CD8-positive, alpha-beta memory T cell (primary cell): ENCODE measurements at regions of chr7 and their contacts with region 1.

Region 1: DNA sequence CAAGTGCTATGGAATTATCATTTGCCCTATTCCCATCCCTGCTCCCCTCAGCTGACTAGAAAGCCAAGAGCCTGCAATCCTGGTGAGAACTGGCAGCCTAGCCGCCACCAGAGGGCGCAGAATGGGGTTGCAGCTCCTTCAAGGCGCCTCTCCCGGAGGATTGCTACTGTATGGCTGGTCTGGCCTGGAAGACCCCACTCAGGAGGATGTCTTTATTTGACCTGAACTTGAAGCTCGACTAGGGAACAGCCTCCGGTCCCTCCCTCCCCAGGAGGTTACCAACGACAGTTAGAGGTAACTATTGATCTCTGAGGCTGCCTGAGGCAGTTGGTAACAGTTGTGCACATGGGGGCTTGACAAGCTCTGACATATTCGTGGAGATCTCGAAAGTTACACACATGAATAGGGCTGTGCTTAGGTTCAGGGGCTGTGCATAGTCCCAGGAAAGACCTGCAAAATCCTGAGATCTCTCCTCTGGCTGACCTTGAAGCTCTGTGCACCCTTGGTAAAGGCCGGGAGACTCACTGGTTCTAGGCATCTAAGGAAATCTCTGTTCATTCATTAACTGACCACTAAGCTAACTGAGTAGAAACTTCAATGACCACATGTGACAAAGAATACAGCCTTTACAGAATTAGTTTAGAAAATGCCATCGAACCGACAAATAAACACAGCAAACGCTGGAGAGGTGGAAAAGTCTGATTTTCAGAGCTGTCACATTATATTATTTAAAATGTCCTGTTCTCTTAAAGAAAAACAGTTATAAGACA is 65.7 kb downstream of the TSPAN12 start:
- DNase-seq: peak; percentile 10 to 63 (median 31)
- H3K4me3 ChIP-seq: no peak overlapping the region
- H3K4me3 Mint-ChIP-seq: no peak overlapping the region
- H3K27ac ChIP-seq: no peak overlapping the region
- H3K27ac Mint-ChIP-seq: no peak overlapping the region
- H3K4me1 ChIP-seq: no peaks in the 10 kb centered on the region
- H3K4me1 Mint-ChIP-seq: no peaks in the 10 kb centered on the region
- H3K27me3 ChIP-seq: no peaks in the 10 kb centered on the region
- H3K27me3 Mint-ChIP-seq: peaks cover 5 to 8% of the 10 kb centered on the region in 2 donors

Region 2: DNA sequence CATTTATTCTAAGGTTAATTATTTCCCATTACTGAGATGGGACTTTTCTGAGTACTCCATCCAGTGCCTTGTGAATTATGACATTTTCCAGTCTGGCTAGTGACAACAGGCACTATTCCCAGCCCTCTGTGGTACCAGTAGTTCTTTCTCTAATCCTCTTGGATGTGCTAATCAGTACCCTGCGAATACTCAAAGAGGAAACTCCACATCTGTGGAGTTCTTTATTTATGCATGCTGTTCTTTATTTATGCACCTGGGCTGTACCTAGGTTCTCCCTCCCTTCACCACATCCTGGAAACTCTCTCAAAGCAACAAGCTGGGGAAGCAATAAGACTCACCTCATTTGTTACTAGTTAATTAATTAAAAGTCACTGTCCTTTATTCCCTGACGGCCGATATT is 17.8 kb before region 1 on chr7:
- CTCF ChIA-PET with region 1: interaction called, 10 read pairs
- POLR2A ChIA-PET with region 1: no interaction called
- DNase-seq: no peak
- H3K4me3 ChIP-seq: no peak overlapping the region
- H3K4me3 Mint-ChIP-seq: no peak overlapping the region
- H3K27ac ChIP-seq: no peak overlapping the region
- H3K27ac Mint-ChIP-seq: no peak overlapping the region
- H3K4me1 ChIP-seq: no peaks in the 10 kb centered on the region
- H3K4me1 Mint-ChIP-seq: no peaks in the 10 kb centered on the region
- H3K27me3 ChIP-seq: no peaks in the 10 kb centered on the region
- H3K27me3 Mint-ChIP-seq: peaks cover 0 to 2% of the 10 kb centered on the region in 2 donors

Region 3: DNA sequence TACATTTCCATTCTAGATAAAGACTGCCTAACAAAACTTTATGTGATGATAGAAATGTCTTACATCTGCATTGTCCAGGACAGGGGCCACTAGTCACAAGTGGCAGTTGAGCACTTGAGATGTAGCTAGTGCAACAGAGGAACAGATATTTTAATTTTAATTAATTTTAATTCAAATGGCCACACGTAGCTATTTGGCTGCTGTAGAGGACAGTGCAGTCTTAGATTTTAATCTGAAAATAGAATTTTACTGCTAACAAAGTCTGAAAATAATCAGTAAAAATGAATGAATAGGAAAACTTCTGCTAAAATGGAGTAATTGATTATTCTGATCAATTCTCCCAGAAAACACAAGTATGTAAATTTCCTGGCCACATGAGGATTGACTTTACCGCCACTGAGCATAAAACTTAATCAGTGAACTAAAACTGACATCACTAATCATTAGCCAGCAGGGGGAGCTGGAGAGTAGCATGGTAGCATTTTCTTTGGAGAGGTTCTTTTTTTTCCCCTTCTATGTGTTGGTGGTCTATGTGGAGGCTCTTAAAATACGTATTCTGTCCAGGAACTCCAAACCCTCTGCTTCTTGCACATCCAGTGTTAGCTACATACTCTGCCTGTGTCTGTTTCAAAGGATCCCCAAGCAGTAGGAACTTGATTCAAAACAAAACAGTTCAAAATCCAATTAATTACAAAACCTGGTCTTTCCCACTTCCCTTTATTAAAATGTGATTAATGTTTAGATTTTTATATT is 13.5 kb after region 1 on chr7:
- CTCF ChIA-PET with region 1: interaction called, 15 read pairs
- POLR2A ChIA-PET with region 1: no interaction called
- DNase-seq: peak; percentile 14 to 52 (median 33)
- H3K4me3 ChIP-seq: no peak overlapping the region
- H3K4me3 Mint-ChIP-seq: no peak overlapping the region
- H3K27ac ChIP-seq: no peak overlapping the region
- H3K27ac Mint-ChIP-seq: no peak overlapping the region
- H3K4me1 ChIP-seq: no peaks in the 10 kb centered on the region
- H3K4me1 Mint-ChIP-seq: no peaks in the 10 kb centered on the region
- H3K27me3 ChIP-seq: no peaks in the 10 kb centered on the region
- H3K27me3 Mint-ChIP-seq: peaks cover 2 to 22% of the 10 kb centered on the region in 2 donors

Region 4: DNA sequence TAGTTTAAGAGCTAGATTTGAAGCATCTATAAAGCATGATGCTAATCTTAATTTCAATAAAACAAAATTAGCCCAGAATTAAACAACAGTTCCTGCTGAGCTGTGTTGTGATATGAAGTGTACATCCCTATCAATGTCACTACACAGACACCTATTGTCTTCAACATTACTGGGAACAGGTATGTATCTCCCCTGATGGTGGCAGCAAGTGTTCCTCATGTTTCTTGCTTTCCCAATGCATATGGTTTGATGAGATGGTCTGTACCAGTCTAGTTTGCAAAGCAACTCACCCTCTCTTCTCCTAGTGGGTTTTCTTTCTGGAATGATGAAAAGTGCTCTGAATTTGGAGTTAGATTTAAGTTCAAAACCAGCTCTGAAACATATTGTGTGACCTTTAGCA is 27.6 kb after region 1 on chr7:
- CTCF ChIA-PET with region 1: no interaction called
- POLR2A ChIA-PET with region 1: no interaction called
- DNase-seq: no peak
- H3K4me3 ChIP-seq: no peak overlapping the region
- H3K4me3 Mint-ChIP-seq: no peak overlapping the region
- H3K27ac ChIP-seq: no peak overlapping the region
- H3K27ac Mint-ChIP-seq: no peak overlapping the region
- H3K4me1 ChIP-seq: no peaks in the 10 kb centered on the region
- H3K4me1 Mint-ChIP-seq: no peaks in the 10 kb centered on the region
- H3K27me3 ChIP-seq: no peaks in the 10 kb centered on the region
- H3K27me3 Mint-ChIP-seq: peaks cover 9 to 32% of the 10 kb centered on the region in 2 donors